CD4-positive, alpha-beta T cell (primary cell): ENCODE measurements at regions of chr20 and their contacts with region 1.

Region 1: GRCh38 chr20:46411637-46412036 is 5.2 kb upstream of the ELMO2 start:
- DNase-seq: no peak
- ATAC-seq: no peak
- H3K4me3 ChIP-seq: no peak overlapping the region
- H3K4me3 Mint-ChIP-seq: peak overlapping the region; percentile 32
- H3K27ac ChIP-seq: no peak overlapping the region
- H3K27ac Mint-ChIP-seq: peak overlapping the region; percentile 21
- H3K4me1 ChIP-seq: peaks cover 25% of the 10 kb centered on the region
- H3K4me1 Mint-ChIP-seq: peaks cover 28% of the 10 kb centered on the region
- H3K27me3 ChIP-seq: peaks cover 8 to 11% of the 10 kb centered on the region in 2 experiments
- H3K27me3 Mint-ChIP-seq: peaks cover 34% of the 10 kb centered on the region
- CTCF ChIP-seq: no peak

Region 2: GRCh38 chr20:46169245-46170171 is 242.1 kb before region 1 on chr20:
- CTCF ChIA-PET with region 1: no interaction called
- POLR2A ChIA-PET with region 1: no interaction called
- intact Hi-C with region 1: no loop called
- DNase-seq: no peak
- ATAC-seq: no peak
- H3K4me3 ChIP-seq: no peak overlapping the region
- H3K4me3 Mint-ChIP-seq: no peak overlapping the region
- H3K27ac ChIP-seq: no peak overlapping the region
- H3K27ac Mint-ChIP-seq: no peak overlapping the region
- H3K4me1 ChIP-seq: no peaks in the 10 kb centered on the region
- H3K4me1 Mint-ChIP-seq: no peaks in the 10 kb centered on the region
- H3K27me3 ChIP-seq: peaks cover 11 to 38% of the 10 kb centered on the region in 2 experiments
- H3K27me3 Mint-ChIP-seq: peaks cover 67% of the 10 kb centered on the region
- CTCF ChIP-seq: no peak

Region 3: GRCh38 chr20:46307139-46307998 is 104.3 kb before region 1 on chr20:
- CTCF ChIA-PET with region 1: interaction called, 9 read pairs
- POLR2A ChIA-PET with region 1: interaction called, 6 read pairs
- intact Hi-C with region 1: loop called in 1 of 2 experiments (anchors 1 kb)
- DNase-seq: peak; percentile 56 to 88 (median 68)
- ATAC-seq: peak; percentile 84
- H3K4me3 ChIP-seq: peak overlapping the region; percentile 37
- H3K4me3 Mint-ChIP-seq: peak overlapping the region; percentile 65
- H3K27ac ChIP-seq: no peak overlapping the region
- H3K27ac Mint-ChIP-seq: no peak overlapping the region
- H3K4me1 ChIP-seq: peaks cover 22% of the 10 kb centered on the region
- H3K4me1 Mint-ChIP-seq: peaks cover 31% of the 10 kb centered on the region
- H3K27me3 ChIP-seq: peaks cover 46 to 67% of the 10 kb centered on the region in 2 experiments
- H3K27me3 Mint-ChIP-seq: peaks cover 83% of the 10 kb centered on the region
- CTCF ChIP-seq: peak; percentile 77